K562 (cell line): ENCODE measurements at regions of chr14 and their contacts with region 1.

Region 1: GRCh38 chr14:105045710-105046326 is 19.4 kb downstream of the GPR132 start:
- DNase-seq: peak; percentile 87 to 90 (median 88)
- ATAC-seq: peak; percentile 98
- H3K4me3 ChIP-seq: no peak overlapping the region
- H3K27ac ChIP-seq: no peak overlapping the region
- H3K4me1 ChIP-seq: peaks cover 0 to 30% of the 10 kb centered on the region in 2 experiments; a peak in 2 of 5 replicates
- H3K27me3 ChIP-seq: peaks cover 0 to 8% of the 10 kb centered on the region in 2 experiments; a peak in 4 of 5 replicates
- CTCF ChIP-seq: peak; percentile 98 to 100 (median 100)
- EP300 ChIP-seq: no peak
- POLR2A ChIP-seq: no peak
- RAD21 ChIP-seq: peak; percentile 99

Region 2: GRCh38 chr14:104895786-104896661 is 149.8 kb before region 1 on chr14:
- CTCF ChIA-PET with region 1: interaction called, 10 read pairs
- POLR2A ChIA-PET with region 1: interaction called, 5 read pairs
- in situ Hi-C with region 1: no loop called
- intact Hi-C with region 1: loop called (anchors 1 kb)
- DNase-seq: no peak
- ATAC-seq: no peak
- H3K4me3 ChIP-seq: no peak overlapping the region
- H3K27ac ChIP-seq: no peak overlapping the region
- H3K4me1 ChIP-seq: peaks cover 0 to 64% of the 10 kb centered on the region in 2 experiments; a peak in 2 of 5 replicates
- H3K27me3 ChIP-seq: peaks cover 0 to 6% of the 10 kb centered on the region in 2 experiments; a peak in 2 of 5 replicates
- CTCF ChIP-seq: no peak
- EP300 ChIP-seq: no peak
- POLR2A ChIP-seq: no peak
- RAD21 ChIP-seq: no peak

Region 3: GRCh38 chr14:104976198-104977007 is 69.4 kb before region 1 on chr14:
- CTCF ChIA-PET with region 1: interaction called, 85 read pairs
- POLR2A ChIA-PET with region 1: no interaction called
- in situ Hi-C with region 1: loop called (anchors 5 kb)
- intact Hi-C with region 1: loop called (anchors 1 kb)
- DNase-seq: peak; percentile 62 to 83 (median 68)
- ATAC-seq: peak; percentile 87
- H3K4me3 ChIP-seq: no peak overlapping the region
- H3K27ac ChIP-seq: no peak overlapping the region
- H3K4me1 ChIP-seq: peaks cover 7 to 80% of the 10 kb centered on the region in 2 experiments; a peak in 4 of 5 replicates
- H3K27me3 ChIP-seq: no peaks in the 10 kb centered on the region
- CTCF ChIP-seq: peak; percentile 78 to 98 (median 93)
- EP300 ChIP-seq: no peak
- POLR2A ChIP-seq: no peak
- RAD21 ChIP-seq: peak; percentile 89 to 97